Activated CD4-positive, alpha-beta memory T cell treated with anti-CD3 and anti-CD28 coated beads, Interleukin-2, amount 10 ng/mL, durations not matched to agents 7 days and 5 days (primary cell): ENCODE measurements at regions of chr15 and their contacts with region 1.

Region 1: DNA sequence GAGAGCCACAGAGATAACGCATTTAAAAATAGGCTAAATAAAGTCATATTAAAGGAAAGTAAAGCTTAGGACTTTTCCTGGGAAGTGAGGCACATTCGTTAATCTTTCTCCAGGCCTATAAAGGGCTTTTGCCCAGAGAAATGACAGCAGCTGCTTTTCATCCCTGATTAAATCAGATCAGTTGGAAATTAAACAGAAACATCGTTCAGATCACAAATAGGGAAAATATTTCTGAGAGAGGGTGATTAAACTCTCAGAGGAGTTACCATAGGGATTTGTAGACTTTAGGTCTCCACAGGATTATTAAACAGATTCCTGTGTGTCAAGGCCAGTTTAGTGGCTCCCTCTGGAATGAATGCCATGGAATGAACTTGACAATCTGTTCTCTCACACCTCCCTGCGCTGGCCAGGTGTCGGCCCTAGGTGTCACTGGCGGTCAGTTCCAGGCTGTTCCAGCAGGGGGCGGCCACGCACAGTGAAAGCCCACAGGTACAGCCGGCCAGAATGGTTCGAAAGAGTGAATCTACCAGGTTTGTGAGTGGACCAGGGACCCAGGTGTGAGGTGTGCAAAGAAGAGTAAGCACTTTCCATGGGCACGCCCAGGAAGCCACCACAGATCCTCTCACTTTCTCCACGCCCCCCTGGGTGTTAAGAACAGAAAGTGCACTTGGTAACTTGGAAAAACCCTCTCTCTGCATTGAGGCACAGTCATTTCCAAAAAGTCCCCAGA is 253.0 kb upstream of the RASGRP1 start:
- DNase-seq: peak; percentile 84
- H3K4me3 Mint-ChIP-seq: no peak overlapping the region
- H3K27ac Mint-ChIP-seq: no peak overlapping the region
- H3K4me1 Mint-ChIP-seq: peaks cover 5% of the 10 kb centered on the region
- H3K27me3 Mint-ChIP-seq: no peaks in the 10 kb centered on the region

Region 2: GRCh38 chr15:38745126-38745525 is 72.5 kb before region 1 on chr15:
- CTCF ChIA-PET with region 1: no interaction called
- POLR2A ChIA-PET with region 1: no interaction called
- DNase-seq: no peak
- H3K4me3 Mint-ChIP-seq: no peak overlapping the region
- H3K27ac Mint-ChIP-seq: no peak overlapping the region
- H3K4me1 Mint-ChIP-seq: no peaks in the 10 kb centered on the region
- H3K27me3 Mint-ChIP-seq: peaks cover 6% of the 10 kb centered on the region

Region 3: DNA sequence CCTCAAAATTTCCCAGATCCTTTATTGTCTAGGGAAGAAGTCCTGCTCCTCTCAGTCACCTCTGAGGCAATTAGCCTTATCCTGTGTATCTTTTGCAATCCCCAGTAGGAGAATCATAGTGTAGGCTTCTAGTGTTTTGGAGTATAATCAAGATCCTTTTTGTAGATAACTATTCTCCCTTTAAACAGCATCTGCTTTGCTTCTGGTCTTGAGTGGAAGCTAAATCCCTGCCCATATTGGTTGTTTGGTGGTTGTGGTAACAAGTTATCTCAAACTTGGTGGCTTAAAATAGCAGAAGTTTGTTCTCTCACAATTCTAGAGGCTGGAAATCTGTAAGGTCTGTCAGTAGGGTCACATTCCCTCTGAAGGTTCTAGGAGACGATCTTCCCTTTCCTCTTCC is 35.4 kb before region 1 on chr15:
- CTCF ChIA-PET with region 1: no interaction called
- POLR2A ChIA-PET with region 1: no interaction called
- DNase-seq: no peak
- H3K4me3 Mint-ChIP-seq: no peak overlapping the region
- H3K27ac Mint-ChIP-seq: no peak overlapping the region
- H3K4me1 Mint-ChIP-seq: no peaks in the 10 kb centered on the region
- H3K27me3 Mint-ChIP-seq: no peaks in the 10 kb centered on the region

Region 4: GRCh38 chr15:38828031-38828532 is 10.5 kb after region 1 on chr15:
- CTCF ChIA-PET with region 1: interaction called, 10 read pairs
- POLR2A ChIA-PET with region 1: no interaction called
- DNase-seq: no peak
- H3K4me3 Mint-ChIP-seq: no peak overlapping the region
- H3K27ac Mint-ChIP-seq: no peak overlapping the region
- H3K4me1 Mint-ChIP-seq: peaks cover 7% of the 10 kb centered on the region
- H3K27me3 Mint-ChIP-seq: peaks cover 6% of the 10 kb centered on the region